ENCODE measurements at regions of chr14 and their contacts with region 1.

Region 1: GRCh38 chr14:71138448-71139293 is 231.4 kb downstream of the PCNX1 start:
- DNase-seq: peak; percentile 36 to 75 (median 64)
- ATAC-seq: peak; percentile 23
- H3K4me3 ChIP-seq: no peak overlapping the region
- H3K4me3 Mint-ChIP-seq: no peak overlapping the region
- H3K27ac ChIP-seq: no peak overlapping the region
- H3K27ac Mint-ChIP-seq: no peak overlapping the region
- H3K4me1 ChIP-seq: peaks cover 18% of the 10 kb centered on the region
- H3K4me1 Mint-ChIP-seq: peaks cover 25% of the 10 kb centered on the region
- H3K27me3 ChIP-seq: no peaks in the 10 kb centered on the region
- H3K27me3 Mint-ChIP-seq: no peaks in the 10 kb centered on the region
- CTCF ChIP-seq: peak; percentile 93

Region 2: DNA sequence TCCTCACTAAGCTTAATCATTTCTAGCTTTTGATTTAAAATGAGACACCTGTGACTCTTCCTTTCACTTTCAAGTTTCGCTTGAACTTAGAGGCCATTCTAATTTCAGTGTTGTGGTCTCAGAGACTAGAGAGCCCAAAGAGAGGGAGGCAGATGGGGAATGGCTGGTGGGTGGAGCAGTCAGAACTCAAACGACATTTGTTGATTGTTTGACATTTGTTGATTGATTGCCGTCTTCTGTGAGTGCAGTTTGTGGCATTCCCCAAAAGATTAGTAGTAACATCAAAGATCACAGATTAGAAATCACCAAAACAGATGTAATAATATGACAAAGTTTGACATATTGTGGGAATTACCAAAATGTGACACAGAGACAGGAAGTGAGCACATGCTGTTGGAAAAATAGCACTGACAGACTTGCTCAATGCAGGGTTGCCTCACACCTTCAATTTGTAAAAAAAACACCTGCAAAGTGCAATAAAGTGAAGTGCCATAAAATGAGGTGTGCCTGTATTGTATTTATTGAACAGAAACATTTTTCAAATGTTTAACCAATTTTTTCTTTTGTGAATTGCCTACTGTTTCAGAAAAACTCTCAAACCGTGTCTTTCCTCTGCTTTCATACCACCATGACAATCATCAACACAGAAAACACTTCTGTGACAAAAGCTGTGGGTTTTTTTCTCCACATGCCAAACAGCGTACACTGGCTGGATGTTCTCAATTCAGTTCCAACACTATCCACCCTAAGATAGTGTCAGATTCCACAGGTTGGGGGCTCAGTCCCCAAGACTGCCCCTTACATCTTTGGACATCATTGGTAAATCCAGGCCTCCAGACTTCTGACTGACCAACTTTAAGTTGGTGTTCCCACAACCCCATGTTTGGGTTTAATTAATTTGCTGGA is 417.2 kb after region 1 on chr14:
- CTCF ChIA-PET with region 1: no interaction called
- POLR2A ChIA-PET with region 1: no interaction called
- intact Hi-C with region 1: loop called in 1 of 2 experiments (anchors 10 kb)
- DNase-seq: peak in 8 of 9 experiments; percentile 15 to 93 (median 52)
- ATAC-seq: peak; percentile 88
- H3K4me3 ChIP-seq: peak overlapping the region in 1 of 2 experiments; percentile 22
- H3K4me3 Mint-ChIP-seq: peak overlapping the region; percentile 81
- H3K27ac ChIP-seq: peak overlapping the region; percentile 54 to 86
- H3K27ac Mint-ChIP-seq: peak overlapping the region; percentile 96
- H3K4me1 ChIP-seq: peaks cover 44% of the 10 kb centered on the region
- H3K4me1 Mint-ChIP-seq: peaks cover 65% of the 10 kb centered on the region
- H3K27me3 ChIP-seq: no peaks in the 10 kb centered on the region
- H3K27me3 Mint-ChIP-seq: no peaks in the 10 kb centered on the region
- CTCF ChIP-seq: no peak

Region 3: GRCh38 chr14:71758229-71758951 is 619.7 kb after region 1 on chr14:
- CTCF ChIA-PET with region 1: interaction called, 269 read pairs
- POLR2A ChIA-PET with region 1: no interaction called
- intact Hi-C with region 1: loop called (anchors 1 kb)
- DNase-seq: no peak
- ATAC-seq: no peak
- H3K4me3 ChIP-seq: no peak overlapping the region
- H3K4me3 Mint-ChIP-seq: no peak overlapping the region
- H3K27ac ChIP-seq: no peak overlapping the region
- H3K27ac Mint-ChIP-seq: no peak overlapping the region
- H3K4me1 ChIP-seq: no peaks in the 10 kb centered on the region
- H3K4me1 Mint-ChIP-seq: no peaks in the 10 kb centered on the region
- H3K27me3 ChIP-seq: peaks cover 0 to 2% of the 10 kb centered on the region in 2 experiments
- H3K27me3 Mint-ChIP-seq: peaks cover 4% of the 10 kb centered on the region
- CTCF ChIP-seq: no peak

Region 4: DNA sequence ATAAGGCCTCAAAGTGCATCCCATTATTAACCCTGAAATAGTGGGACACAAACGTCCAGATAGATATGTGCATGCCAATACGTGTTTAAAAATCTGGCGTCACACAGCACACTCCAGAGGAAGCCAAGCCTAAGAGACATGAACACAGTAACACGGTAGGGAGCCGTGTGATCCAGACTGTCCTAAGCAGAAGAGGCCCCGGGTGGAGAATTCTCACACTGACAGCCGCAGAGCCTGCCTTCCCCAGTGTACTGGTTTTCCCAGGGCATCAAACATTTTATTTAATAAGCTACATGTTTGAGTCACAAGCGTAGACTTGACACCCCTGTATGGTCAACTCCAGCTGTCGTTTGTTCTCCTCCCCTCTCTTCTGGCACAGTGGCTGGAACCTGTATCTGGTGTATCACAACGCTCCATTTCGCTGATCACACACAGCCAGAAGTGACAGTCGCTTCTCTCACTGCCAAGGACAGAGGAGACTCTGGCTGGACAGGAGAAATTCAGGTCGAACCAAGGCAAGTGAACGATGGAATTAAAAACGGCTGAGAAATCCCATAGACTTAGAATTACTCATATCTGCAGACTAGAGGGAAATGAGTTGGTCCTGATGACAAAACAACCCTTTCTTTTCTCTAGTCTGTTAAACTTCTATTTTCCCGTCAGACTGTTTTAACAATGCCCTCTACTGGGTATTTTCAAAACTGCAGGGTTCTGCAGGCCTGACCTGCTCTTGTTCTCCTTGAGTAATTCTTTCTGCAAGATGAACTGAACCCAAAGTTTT is 1153.4 kb after region 1 on chr14:
- CTCF ChIA-PET with region 1: no interaction called
- POLR2A ChIA-PET with region 1: no interaction called
- intact Hi-C with region 1: loop called in 1 of 2 experiments (anchors 10 kb)
- DNase-seq: peak in 2 of 9 experiments; percentile 5 to 9
- ATAC-seq: no peak
- H3K4me3 ChIP-seq: no peak overlapping the region
- H3K4me3 Mint-ChIP-seq: no peak overlapping the region
- H3K27ac ChIP-seq: no peak overlapping the region
- H3K27ac Mint-ChIP-seq: no peak overlapping the region
- H3K4me1 ChIP-seq: no peaks in the 10 kb centered on the region
- H3K4me1 Mint-ChIP-seq: no peaks in the 10 kb centered on the region
- H3K27me3 ChIP-seq: no peaks in the 10 kb centered on the region
- H3K27me3 Mint-ChIP-seq: peaks cover 16% of the 10 kb centered on the region
- CTCF ChIP-seq: no peak